ENCODE measurements at regions of chr1 and their contacts with region 1.

Region 1: GRCh38 chr1:98749152-98749756 is 87.7 kb downstream of the SNX7 start:
- DNase-seq: no peak
- H3K4me3 Mint-ChIP-seq: no peak overlapping the region
- H3K27ac Mint-ChIP-seq: no peak overlapping the region
- H3K4me1 Mint-ChIP-seq: no peaks in the 10 kb centered on the region
- H3K27me3 Mint-ChIP-seq: peaks cover 3% of the 10 kb centered on the region

Region 2: GRCh38 chr1:98860329-98860728 is 111.1 kb after region 1 on chr1:
- intact Hi-C with region 1: no loop called
- DNase-seq: no peak
- H3K4me3 Mint-ChIP-seq: no peak overlapping the region
- H3K27ac Mint-ChIP-seq: no peak overlapping the region
- H3K4me1 Mint-ChIP-seq: no peaks in the 10 kb centered on the region
- H3K27me3 Mint-ChIP-seq: no peaks in the 10 kb centered on the region

Region 3: DNA sequence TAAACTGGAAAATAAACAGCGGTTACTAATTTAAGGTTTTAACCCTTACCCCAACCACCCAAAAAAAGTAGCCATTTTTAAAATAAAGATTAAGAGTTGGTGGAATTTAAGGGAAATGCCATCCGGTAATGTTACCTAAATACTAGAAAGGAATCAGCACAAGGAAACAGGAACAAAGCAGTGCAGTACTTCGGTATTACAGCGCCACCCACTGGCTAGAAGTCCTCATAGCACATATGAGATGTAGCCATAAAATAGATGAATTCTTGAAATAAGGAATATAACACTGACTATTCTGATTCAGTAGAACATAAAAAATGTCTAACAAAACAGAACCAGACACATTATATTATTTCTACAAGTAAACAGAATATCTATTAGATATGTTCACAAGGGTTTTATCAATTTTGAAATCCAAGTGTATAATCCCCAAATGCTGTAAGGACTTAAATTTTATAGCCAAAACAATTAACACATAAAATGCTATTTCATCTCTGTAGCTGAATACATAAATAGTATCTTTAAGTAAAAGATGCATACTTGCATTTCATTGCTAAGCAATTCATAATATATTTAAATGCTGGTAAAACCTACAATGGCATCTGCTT is 958.4 kb after region 1 on chr1:
- intact Hi-C with region 1: loop called (anchors 2 kb)
- DNase-seq: peak; percentile 16
- H3K4me3 Mint-ChIP-seq: no peak overlapping the region
- H3K27ac Mint-ChIP-seq: no peak overlapping the region
- H3K4me1 Mint-ChIP-seq: peaks cover 16% of the 10 kb centered on the region
- H3K27me3 Mint-ChIP-seq: peaks cover 2% of the 10 kb centered on the region

Measured in activated T-helper 1 cell treated with anti-CD3 and anti-CD28 coated beads, Interleukin-12 subunit alpha, Interleukin-12 subunit beta, Interleukin-2, Interleukin-4 antibody, amounts not matched to agents 30 ng/mL and 10 ng/mL and 1 ng/mL, durations not matched to agents 14 hours and 24 hours and 36 hours (primary cell).